ENCODE measurements at regions of chr1 and their contacts with region 1.

Region 1: DNA sequence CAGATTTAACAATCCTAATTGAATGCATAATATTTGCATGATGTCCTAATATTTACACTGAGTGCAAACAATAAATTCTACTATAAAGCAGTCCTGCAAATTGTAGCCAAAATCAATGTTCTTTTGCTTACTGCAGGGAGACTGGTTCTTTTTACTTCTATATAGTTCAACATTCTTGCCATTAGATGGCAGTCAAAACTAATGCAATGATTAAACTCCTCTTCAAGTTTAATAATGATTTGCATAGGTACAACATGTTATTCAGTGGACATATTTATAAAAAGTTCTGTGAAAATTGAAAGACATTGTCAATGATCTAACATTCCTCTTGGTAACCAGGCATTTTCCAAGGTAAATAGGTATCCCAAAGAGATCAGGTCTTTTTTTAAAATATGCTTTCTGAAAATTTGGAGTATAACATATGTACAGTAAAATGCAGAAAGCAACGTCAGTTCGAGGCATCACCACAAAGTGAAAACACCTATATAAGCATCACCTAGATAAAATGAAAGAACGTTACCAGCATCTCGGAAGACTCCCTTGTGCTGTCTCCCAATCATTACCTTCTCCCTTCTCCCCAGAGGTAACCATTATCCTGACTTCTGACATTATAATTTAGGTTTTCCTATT is 9.8 kb upstream of the FNBP1L start:
- DNase-seq: no peak
- H3K4me3 ChIP-seq: no peak overlapping the region
- H3K27ac ChIP-seq: no peak overlapping the region
- H3K4me1 ChIP-seq: no peaks in the 10 kb centered on the region
- H3K27me3 ChIP-seq: no peaks in the 10 kb centered on the region
- CTCF ChIP-seq: peak in 3 of 4 experiments; percentile 70 to 78 (median 77)
- POLR2A ChIP-seq: no peak

Region 2: DNA sequence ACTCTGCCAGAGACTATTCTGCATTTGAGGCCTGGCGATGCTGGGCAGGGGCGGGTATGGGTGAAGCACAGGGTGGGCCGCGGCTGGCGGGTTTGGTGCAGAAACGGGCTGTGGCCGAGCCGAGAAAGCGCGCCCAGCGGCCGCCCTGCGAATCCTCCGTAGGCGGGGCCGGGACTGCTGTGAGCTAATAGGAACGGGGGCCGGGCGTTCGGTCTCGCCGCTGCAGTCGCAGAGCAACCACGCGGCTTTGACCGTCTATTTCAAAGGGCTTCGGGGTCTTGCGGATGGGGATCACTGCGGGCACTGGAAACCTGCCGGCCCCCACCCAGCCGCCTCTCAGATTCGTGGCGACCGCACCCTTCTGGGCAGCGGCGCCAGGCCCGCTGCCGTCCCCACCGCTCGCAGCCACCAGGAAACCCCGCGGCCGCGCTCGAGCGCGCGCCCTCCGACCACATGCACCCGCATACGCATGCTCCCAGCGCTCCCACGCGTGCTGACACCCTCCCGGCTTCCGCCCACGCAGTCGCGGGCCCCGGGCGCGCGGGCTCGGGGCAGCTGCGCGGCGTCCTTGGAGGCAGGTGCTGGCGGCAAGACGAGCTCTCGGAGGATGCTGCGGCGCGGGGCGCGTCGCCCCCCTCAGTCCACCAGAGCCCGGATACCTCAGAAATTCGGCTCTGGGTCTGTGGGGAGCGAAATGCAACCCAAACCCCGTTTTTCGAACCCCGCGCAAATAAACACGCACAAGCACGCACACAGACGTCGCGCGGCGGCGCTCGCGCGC is 408.3 kb after region 1 on chr1:
- intact Hi-C with region 1: loop called (anchors 5 kb)
- DNase-seq: peak; percentile 86
- H3K4me3 ChIP-seq: peak overlapping the region; percentile 60 to 77
- H3K27ac ChIP-seq: peak overlapping the region; percentile 92 to 97
- H3K4me1 ChIP-seq: no peaks in the 10 kb centered on the region
- H3K27me3 ChIP-seq: no peaks in the 10 kb centered on the region
- CTCF ChIP-seq: peak in 3 of 4 experiments; percentile 10 to 55 (median 52)
- POLR2A ChIP-seq: peak; percentile 39

Measured in prostate gland (tissue), 2 donors.